ENCODE measurements at regions of chr7 and their contacts with region 1.

Region 1: DNA sequence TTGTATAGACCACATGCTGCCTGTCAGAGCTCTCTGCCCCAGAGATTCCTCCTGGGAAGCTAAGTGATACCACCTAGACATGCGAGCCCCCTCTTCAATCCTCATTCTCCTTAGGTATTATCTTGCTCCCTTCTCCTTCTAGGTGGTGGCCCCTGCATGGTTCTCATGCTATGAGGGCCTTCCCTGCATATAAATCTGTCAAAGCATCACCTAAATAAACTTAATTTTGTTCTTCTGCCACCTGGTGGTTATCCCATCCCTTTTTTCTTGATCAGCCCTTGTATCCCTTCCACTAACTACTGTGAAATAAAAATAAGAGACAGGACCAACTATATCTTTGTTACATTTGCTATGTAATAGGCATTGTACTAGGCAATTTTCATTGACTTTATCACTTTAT is 242.1 kb downstream of the CDC14C start:
- DNase-seq: no peak
- ATAC-seq: no peak

Region 2: GRCh38 chr7:49119706-49120105 is 46.7 kb before region 1 on chr7:
- intact Hi-C with region 1: loop called (anchors 2 kb)
- DNase-seq: no peak
- ATAC-seq: no peak